Endothelial cell of umbilical vein (primary cell): ENCODE measurements at regions of chr2 and their contacts with region 1.

Region 1: DNA sequence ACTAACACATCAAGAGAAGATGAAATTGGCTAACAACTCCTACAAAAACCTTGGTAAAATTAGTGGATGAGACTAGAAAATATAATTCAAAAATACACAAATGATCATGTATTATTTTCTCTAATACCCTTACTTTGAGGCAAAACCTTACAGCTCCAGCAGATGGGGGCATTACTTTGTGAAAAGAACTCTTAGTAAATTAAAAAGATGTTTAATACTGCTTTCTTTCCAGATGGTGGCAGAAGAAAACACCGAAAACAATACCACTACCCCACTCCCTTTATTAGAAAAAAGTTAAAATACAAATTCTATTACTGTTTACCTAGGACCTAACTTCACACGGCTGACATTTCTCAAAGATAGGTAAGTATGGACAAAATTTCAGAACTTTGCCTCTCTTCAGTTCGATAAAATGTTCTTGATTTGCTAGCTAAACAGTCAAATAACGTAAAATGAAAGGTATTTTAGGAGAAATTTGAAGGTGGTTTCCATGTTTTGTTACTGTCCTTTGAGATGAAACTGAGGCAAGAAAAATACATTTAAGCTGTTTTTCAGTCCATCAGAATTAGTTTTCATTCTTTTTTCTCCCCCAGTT is 30.6 kb downstream of the ORC4 start:
- DNase-seq: peak; percentile 66
- H3K4me3 ChIP-seq: no peak overlapping the region
- H3K27ac ChIP-seq: no peak overlapping the region
- H3K4me1 ChIP-seq: no peaks in the 10 kb centered on the region
- H3K27me3 ChIP-seq: no peaks in the 10 kb centered on the region
- CTCF ChIP-seq: peak; percentile 32 to 44
- POLR2A ChIP-seq: no peak

Region 2: GRCh38 chr2:148201075-148202004 is 211.4 kb after region 1 on chr2:
- CTCF ChIA-PET with region 1: interaction called, 14 read pairs
- POLR2A ChIA-PET with region 1: no interaction called
- dilution Hi-C with region 1: no loop called
- intact Hi-C with region 1: loop called (anchors 1 kb)
- DNase-seq: peak; percentile 22
- H3K4me3 ChIP-seq: no peak overlapping the region
- H3K27ac ChIP-seq: no peak overlapping the region
- H3K4me1 ChIP-seq: no peaks in the 10 kb centered on the region
- H3K27me3 ChIP-seq: no peaks in the 10 kb centered on the region
- CTCF ChIP-seq: peak; percentile 29 to 53
- POLR2A ChIP-seq: no peak

Region 3: GRCh38 chr2:148238561-148238960 is 248.7 kb after region 1 on chr2:
- CTCF ChIA-PET with region 1: no interaction called
- POLR2A ChIA-PET with region 1: no interaction called
- dilution Hi-C with region 1: no loop called
- intact Hi-C with region 1: no loop called
- DNase-seq: no peak
- H3K4me3 ChIP-seq: no peak overlapping the region
- H3K27ac ChIP-seq: no peak overlapping the region
- H3K4me1 ChIP-seq: no peaks in the 10 kb centered on the region
- H3K27me3 ChIP-seq: no peaks in the 10 kb centered on the region
- CTCF ChIP-seq: no peak
- POLR2A ChIP-seq: no peak

Region 4: GRCh38 chr2:148503516-148503915 is 513.6 kb after region 1 on chr2:
- CTCF ChIA-PET with region 1: interaction called, 174 read pairs
- POLR2A ChIA-PET with region 1: no interaction called
- dilution Hi-C with region 1: no loop called
- intact Hi-C with region 1: no loop called
- DNase-seq: no peak
- H3K4me3 ChIP-seq: no peak overlapping the region
- H3K27ac ChIP-seq: no peak overlapping the region
- H3K4me1 ChIP-seq: no peaks in the 10 kb centered on the region
- H3K27me3 ChIP-seq: no peaks in the 10 kb centered on the region
- CTCF ChIP-seq: no peak
- POLR2A ChIP-seq: no peak

Region 5: DNA sequence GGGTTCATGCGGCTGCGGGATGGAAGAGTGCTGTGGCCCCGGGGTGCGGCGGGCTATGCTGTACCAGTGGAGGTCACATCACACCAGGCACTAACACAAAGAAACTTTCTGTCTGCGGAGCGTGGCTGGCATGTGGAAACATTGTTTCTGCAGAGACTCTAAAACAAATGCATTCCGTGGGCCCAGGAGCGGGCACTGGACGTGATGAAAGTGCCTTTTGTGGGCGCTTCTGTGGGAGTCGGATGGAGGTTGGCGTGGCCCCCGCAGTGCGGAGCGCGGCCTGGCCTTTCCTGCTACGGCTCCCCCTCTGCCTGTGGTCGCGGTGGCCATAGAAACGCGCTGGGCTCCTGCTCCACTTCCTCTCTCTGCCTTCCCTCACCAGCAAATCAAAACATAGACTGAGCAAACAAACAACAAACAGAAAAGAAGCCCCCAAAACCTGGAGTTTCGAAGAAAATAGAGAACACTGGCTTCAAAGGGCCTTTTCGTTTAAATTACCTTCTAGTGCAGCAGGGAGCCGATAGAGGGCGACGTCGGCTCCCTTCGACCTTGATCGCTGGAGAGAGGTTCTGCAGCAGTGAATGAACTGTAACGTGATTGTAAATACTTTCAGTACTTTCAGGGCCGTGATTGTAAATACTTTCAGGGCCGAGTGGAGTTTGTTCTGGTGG is 936.5 kb after region 1 on chr2:
- CTCF ChIA-PET with region 1: interaction called, 3 read pairs
- POLR2A ChIA-PET with region 1: no interaction called
- dilution Hi-C with region 1: no loop called
- intact Hi-C with region 1: loop called (anchors 5 kb)
- DNase-seq: peak; percentile 58
- H3K4me3 ChIP-seq: no peak overlapping the region
- H3K27ac ChIP-seq: no peak overlapping the region
- H3K4me1 ChIP-seq: no peaks in the 10 kb centered on the region
- H3K27me3 ChIP-seq: no peaks in the 10 kb centered on the region
- CTCF ChIP-seq: peak; percentile 74 to 75
- POLR2A ChIP-seq: no peak